PC-9 (cell line): ENCODE measurements at regions of chr10 and their contacts with region 1.

Region 1: GRCh38 chr10:65470986-65471385 is 1454.8 kb upstream of the LRRTM3 start:
- DNase-seq: no peak
- H3K4me3 ChIP-seq: no peak overlapping the region
- H3K27ac ChIP-seq: no peak overlapping the region
- H3K4me1 ChIP-seq: no peaks in the 10 kb centered on the region
- H3K27me3 ChIP-seq: no peaks in the 10 kb centered on the region
- CTCF ChIP-seq: no peak

Region 2: GRCh38 chr10:66162560-66163143 is 691.7 kb after region 1 on chr10:
- CTCF ChIA-PET with region 1: no interaction called
- POLR2A ChIA-PET with region 1: no interaction called
- intact Hi-C with region 1: loop called (anchors 5 kb)
- DNase-seq: peak in 1 of 2 experiments; percentile 26
- H3K4me3 ChIP-seq: no peak overlapping the region
- H3K27ac ChIP-seq: no peak overlapping the region
- H3K4me1 ChIP-seq: no peaks in the 10 kb centered on the region
- H3K27me3 ChIP-seq: no peaks in the 10 kb centered on the region
- CTCF ChIP-seq: no peak